Posterior cingulate gyrus (tissue), 11 donors: ENCODE measurements at regions of chr2 and their contacts with region 1.

Region 1: GRCh38 chr2:38778687-38779082 is 675 bp downstream of the GEMIN6 start:
- DNase-seq: no peak

Region 2: GRCh38 chr2:38720613-38721241 is 58.0 kb before region 1 on chr2:
- intact Hi-C with region 1: no loop called
- DNase-seq: peak in 7 of 10 donors; percentile 13 to 92 (median 48)

Region 3: GRCh38 chr2:38750891-38751595 is 27.6 kb before region 1 on chr2 and contains the start of gene SRSF7:
- intact Hi-C with region 1: loop called (anchors 1 kb)
- DNase-seq: peak; percentile 92 to 99 (median 96)